T-cell (primary cell): ENCODE measurements at regions of chr10 and their contacts with region 1.

Region 1: DNA sequence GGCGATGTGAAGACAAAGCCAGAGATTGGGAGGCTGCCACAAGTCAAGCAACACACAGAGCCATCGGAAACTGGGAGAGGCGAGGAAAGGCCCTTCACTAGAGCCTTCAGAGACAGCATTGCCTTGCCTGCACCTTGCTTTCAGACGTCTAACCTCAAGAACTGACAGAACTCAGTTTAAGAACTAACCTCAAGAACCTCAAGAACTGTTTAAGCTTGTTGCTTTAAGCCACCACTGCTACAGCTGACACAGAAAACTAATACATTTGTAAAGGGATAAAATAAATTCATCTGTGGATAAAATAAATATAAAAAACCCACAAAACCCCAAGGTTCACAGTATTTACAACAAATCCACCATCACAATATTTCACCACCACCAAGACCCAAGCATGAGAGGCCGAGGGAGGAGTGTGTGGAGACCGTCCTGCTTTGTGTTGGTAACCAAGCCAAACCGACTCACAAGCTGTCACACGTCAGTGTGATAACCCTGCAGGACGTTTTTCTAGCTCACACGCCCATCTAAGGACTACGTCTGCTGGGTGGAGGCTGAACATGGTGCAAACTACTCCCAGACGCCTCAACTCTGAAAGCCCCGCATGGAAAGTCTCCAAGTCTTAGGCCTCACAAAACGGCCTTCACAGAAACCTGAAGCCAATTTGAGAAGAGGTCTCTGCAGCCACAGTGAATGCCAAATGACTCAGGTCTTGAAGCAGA is 116.8 kb downstream of the ABLIM1 start:
- DNase-seq: peak in 34 of 35 experiments; percentile 61 to 92 (median 77)
- ATAC-seq: peak; percentile 74 to 82 (median 78)
- H3K4me3 ChIP-seq: peak overlapping the region; percentile 8 to 11
- H3K4me3 Mint-ChIP-seq: peak overlapping the region; percentile 28 to 82 (median 37)
- H3K27ac ChIP-seq: peak overlapping the region; percentile 98
- H3K27ac Mint-ChIP-seq: peak overlapping the region; percentile 93 to 95
- H3K4me1 ChIP-seq: peaks cover 75 to 84% of the 10 kb centered on the region in 2 experiments
- H3K4me1 Mint-ChIP-seq: peaks cover 92 to 95% (median 92%) of the 10 kb centered on the region in 3 donors
- H3K27me3 ChIP-seq: no peaks in the 10 kb centered on the region
- H3K27me3 Mint-ChIP-seq: no peaks in the 10 kb centered on the region

Region 2: GRCh38 chr10:114504769-114505579 is 36.3 kb before region 1 on chr10:
- CTCF ChIA-PET with region 1: interaction called in 1 of 2 experiments, 5 read pairs
- POLR2A ChIA-PET with region 1: interaction called in 1 of 2 experiments, 12 read pairs
- DNase-seq: no peak
- ATAC-seq: no peak
- H3K4me3 ChIP-seq: no peak overlapping the region
- H3K4me3 Mint-ChIP-seq: peak overlapping the region in 1 of 3 donors; percentile 24
- H3K27ac ChIP-seq: no peak overlapping the region
- H3K27ac Mint-ChIP-seq: peak overlapping the region; percentile 58 to 82
- H3K4me1 ChIP-seq: peaks cover 50 to 65% of the 10 kb centered on the region in 2 experiments
- H3K4me1 Mint-ChIP-seq: peaks cover 94 to 96% (median 95%) of the 10 kb centered on the region in 3 donors
- H3K27me3 ChIP-seq: no peaks in the 10 kb centered on the region
- H3K27me3 Mint-ChIP-seq: no peaks in the 10 kb centered on the region

Region 3: GRCh38 chr10:114519284-114519624 is 22.0 kb before region 1 on chr10:
- CTCF ChIA-PET with region 1: interaction called, 6 to 88 read pairs
- POLR2A ChIA-PET with region 1: interaction called, 27 to 220 read pairs
- DNase-seq: no peak
- ATAC-seq: no peak
- H3K4me3 ChIP-seq: no peak overlapping the region
- H3K4me3 Mint-ChIP-seq: peak overlapping the region; percentile 58 to 94 (median 70)
- H3K27ac ChIP-seq: no peak overlapping the region
- H3K27ac Mint-ChIP-seq: peak overlapping the region; percentile 89 to 95
- H3K4me1 ChIP-seq: peaks cover 88 to 91% of the 10 kb centered on the region in 2 experiments
- H3K4me1 Mint-ChIP-seq: peaks cover 96 to 100% (median 97%) of the 10 kb centered on the region in 3 donors
- H3K27me3 ChIP-seq: no peaks in the 10 kb centered on the region
- H3K27me3 Mint-ChIP-seq: no peaks in the 10 kb centered on the region

Region 4: DNA sequence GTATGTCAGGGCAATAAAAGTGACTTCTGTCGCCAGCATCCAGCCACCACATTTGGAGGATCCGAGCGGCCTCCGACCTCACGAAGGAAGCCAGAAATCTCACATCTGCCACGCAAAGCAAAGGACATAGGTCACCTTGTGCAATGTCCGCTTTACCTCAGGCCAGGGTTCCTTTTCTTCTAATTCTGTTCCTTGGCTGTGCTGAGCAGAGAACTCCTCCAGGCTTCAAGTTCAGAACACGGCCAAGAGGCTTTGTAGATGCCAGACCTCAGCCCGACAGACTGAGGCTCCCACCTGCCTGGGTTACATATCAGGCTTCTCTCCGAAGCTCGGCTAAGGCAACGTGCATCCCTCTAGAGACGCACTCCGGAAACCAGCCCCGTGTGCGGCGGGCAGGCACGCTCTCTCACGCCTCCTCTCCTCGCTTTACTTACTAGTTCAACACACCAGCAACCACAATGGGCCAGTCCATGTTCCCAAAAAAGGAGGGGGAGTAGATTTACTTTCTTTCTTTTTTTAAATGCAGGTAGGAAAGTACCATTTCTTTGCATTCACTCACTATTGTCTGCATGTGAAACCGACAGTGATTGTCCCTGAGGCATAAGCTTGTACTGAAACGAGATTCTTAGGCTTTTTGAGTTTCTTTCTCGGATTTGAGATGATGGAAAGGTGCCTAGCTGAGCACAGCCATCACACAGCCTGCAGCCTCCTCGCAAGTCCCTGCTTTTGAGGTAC is 14.6 kb before region 1 on chr10:
- CTCF ChIA-PET with region 1: interaction called, 3 to 88 read pairs
- POLR2A ChIA-PET with region 1: interaction called, 27 to 220 read pairs
- DNase-seq: peak; percentile 71 to 97 (median 91)
- ATAC-seq: peak; percentile 92 to 96 (median 96)
- H3K4me3 ChIP-seq: peak overlapping the region; percentile 68 to 93
- H3K4me3 Mint-ChIP-seq: peak overlapping the region; percentile 93 to 94 (median 94)
- H3K27ac ChIP-seq: peak overlapping the region; percentile 83
- H3K27ac Mint-ChIP-seq: peak overlapping the region; percentile 95 to 98
- H3K4me1 ChIP-seq: peaks cover 33 to 59% of the 10 kb centered on the region in 2 experiments
- H3K4me1 Mint-ChIP-seq: peaks cover 57 to 74% (median 67%) of the 10 kb centered on the region in 3 donors
- H3K27me3 ChIP-seq: no peaks in the 10 kb centered on the region
- H3K27me3 Mint-ChIP-seq: no peaks in the 10 kb centered on the region